Mammary epithelial cell (primary cell): ENCODE measurements at regions of chr9 and their contacts with region 1.

Region 1: DNA sequence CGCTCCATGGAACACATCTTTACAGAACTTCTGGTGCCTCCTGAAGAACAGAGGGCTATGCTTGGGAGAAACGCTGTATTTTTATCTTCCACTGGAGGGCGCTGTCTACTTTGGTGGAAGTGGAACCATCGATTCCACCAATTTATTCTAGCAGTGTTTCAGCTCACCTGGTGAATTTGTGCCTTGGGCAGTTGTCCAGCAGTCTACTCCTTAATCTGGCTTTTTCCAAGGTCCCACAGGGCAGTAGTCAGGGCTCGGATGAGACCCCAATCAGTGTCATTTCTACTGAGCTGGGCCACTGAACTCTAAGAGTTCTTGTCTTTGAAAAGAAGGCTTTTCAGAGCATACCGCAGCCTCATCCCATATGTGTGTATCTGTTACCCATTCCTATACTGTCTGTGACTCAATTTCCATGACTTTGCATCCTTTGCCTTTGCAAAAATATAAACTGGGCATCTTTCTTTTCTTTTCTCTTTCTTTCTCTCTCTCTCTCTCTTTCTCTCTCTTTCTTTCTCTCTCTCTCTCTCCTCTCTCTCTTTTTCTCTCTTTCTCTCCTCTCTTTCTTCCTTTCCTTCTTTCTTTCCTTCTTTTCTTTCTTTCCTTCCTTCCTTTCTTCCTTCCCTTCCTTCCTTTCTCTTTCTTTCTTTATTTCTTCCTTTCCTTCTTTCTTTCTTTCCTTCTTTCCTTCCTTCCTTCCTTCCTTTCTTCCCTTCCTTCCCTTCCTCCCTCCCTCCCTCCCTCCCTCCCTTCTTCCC is 138.4 kb upstream of the ZNF618 start:
- DNase-seq: peak; percentile 57
- H3K4me3 ChIP-seq: no peak overlapping the region
- H3K27ac ChIP-seq: no peak overlapping the region
- H3K4me1 ChIP-seq: peaks cover 8% of the 10 kb centered on the region
- H3K27me3 ChIP-seq: no peaks in the 10 kb centered on the region
- CTCF ChIP-seq: peak; percentile 81 to 88

Region 2: GRCh38 chr9:113705928-113706519 is 31.7 kb before region 1 on chr9:
- CTCF ChIA-PET with region 1: no interaction called
- dilution Hi-C with region 1: loop called (anchors 5 kb)
- in situ Hi-C with region 1: no loop called
- intact Hi-C with region 1: no loop called
- DNase-seq: no peak
- H3K4me3 ChIP-seq: no peak overlapping the region
- H3K27ac ChIP-seq: no peak overlapping the region
- H3K4me1 ChIP-seq: no peaks in the 10 kb centered on the region
- H3K27me3 ChIP-seq: no peaks in the 10 kb centered on the region
- CTCF ChIP-seq: no peak

Region 3: DNA sequence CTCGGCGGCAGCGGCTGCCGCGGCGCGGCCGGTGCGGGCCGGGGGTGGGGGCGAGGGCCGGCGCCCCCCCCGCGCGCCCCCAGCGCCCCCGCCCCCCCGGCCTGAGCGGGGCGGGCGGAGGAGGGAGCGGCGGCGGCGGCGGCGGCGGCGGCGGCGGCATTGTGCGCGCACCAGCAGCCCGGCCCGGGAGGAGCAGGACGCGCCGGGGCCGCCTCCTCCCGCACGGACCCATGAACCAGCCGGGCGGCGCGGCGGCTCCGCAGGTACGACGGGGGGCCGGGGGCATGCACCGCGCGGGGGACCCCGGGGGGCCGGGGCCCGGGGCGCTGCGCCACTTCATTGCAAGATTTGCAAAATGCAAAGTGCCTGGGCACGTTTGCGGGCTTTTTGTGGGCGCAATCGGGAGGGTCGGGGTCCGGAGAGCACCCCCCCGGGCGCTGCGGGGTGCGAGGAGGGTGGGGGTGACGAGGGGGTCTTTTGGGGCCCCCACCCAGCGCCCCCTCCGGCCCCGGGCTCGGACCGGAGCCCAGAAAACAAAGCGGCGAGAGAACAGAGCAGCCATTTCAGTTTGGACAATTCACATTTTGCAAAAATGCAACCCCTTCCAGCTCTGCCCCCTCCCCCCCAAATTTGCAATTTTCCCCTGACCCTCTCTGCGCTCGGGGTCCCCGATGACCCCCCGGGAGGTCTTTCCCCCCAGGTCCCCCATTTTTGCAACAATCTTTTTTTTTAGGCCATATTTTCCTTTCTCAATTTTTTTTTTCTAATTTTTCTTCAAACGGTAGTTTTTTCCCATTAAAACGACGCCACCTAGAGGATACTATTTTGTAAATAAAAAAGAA is 138.7 kb after region 1 on chr9 and contains the start of gene ZNF618:
- CTCF ChIA-PET with region 1: no interaction called
- dilution Hi-C with region 1: no loop called
- in situ Hi-C with region 1: no loop called
- intact Hi-C with region 1: loop called (anchors 1 kb)
- DNase-seq: no peak
- H3K4me3 ChIP-seq: peak within 1 kb of the TSS; percentile 51 to 88 (median 87)
- H3K27ac ChIP-seq: peak within 1 kb of the TSS; percentile 72
- H3K4me1 ChIP-seq: peaks cover 26% of the 10 kb centered on the region
- H3K27me3 ChIP-seq: no peaks in the 10 kb centered on the region
- CTCF ChIP-seq: peak; percentile 23 to 43
- total RNA-seq, gene ZNF618: 18.0 to 19.6 TPM

Region 4: DNA sequence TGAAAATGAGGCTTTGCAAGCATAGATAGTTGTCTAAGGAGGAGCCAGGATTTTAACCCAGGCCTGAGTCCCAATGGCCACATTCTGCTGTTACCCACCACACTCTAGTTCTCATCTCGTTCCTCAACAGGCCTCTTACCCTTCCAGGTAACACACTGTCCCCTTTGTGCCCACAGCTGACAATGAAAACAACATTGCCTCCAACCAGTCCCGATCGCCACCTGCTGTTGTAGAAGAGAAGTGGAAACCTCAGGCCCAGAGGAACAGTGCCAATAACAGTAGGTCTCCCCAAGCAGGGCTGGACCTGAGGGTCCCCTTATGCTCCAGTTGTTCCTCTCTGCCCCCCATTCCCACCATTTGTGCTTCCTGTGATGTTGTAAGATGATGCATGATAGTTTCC is 310.0 kb after region 1 on chr9:
- CTCF ChIA-PET with region 1: interaction called, 3 read pairs
- dilution Hi-C with region 1: no loop called
- in situ Hi-C with region 1: loop called in 1 of 2 experiments (anchors 10 kb)
- intact Hi-C with region 1: loop called (anchors 1 kb)
- DNase-seq: no peak
- H3K4me3 ChIP-seq: no peak overlapping the region
- H3K27ac ChIP-seq: no peak overlapping the region
- H3K4me1 ChIP-seq: peaks cover 9% of the 10 kb centered on the region
- H3K27me3 ChIP-seq: no peaks in the 10 kb centered on the region
- CTCF ChIP-seq: peak; percentile 25 to 46

Region 5: DNA sequence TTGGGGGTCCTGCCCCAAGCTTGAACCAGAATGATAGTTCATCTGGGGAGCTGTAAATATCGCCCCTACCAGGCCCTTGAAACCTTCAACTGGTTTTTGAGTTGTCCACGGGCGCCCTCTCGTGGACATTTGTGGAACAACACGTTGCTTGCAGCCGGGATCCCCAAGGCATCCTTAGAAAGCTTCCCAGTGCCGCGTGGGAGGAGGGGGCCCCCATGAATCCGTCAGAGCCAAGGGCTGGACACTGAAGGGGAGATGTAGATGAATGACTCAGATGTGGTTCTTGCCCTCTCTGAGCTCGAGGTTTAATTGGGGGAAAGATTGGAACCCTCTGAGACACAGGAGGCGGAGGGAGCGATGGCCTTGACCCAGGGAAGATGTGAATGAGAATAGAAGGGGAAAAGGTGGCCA is 553.4 kb after region 1 on chr9:
- CTCF ChIA-PET with region 1: no interaction called
- dilution Hi-C with region 1: no loop called
- in situ Hi-C with region 1: loop called in 1 of 2 experiments (anchors 25 kb)
- intact Hi-C with region 1: no loop called
- DNase-seq: peak; percentile 50
- H3K4me3 ChIP-seq: no peak overlapping the region
- H3K27ac ChIP-seq: no peak overlapping the region
- H3K4me1 ChIP-seq: peaks cover 20% of the 10 kb centered on the region
- H3K27me3 ChIP-seq: no peaks in the 10 kb centered on the region
- CTCF ChIP-seq: peak; percentile 82 to 84